B cell (primary cell): ENCODE measurements at regions of chr4 and their contacts with region 1.

Region 1: GRCh38 chr4:101114936-101115372 is 232.4 kb downstream of the PPP3CA start:
- DNase-seq: no peak
- ATAC-seq: no peak
- H3K4me3 ChIP-seq: no peak overlapping the region
- H3K4me3 Mint-ChIP-seq: no peak overlapping the region
- H3K27ac ChIP-seq: no peak overlapping the region
- H3K27ac Mint-ChIP-seq: peak overlapping the region; percentile 48
- H3K4me1 ChIP-seq: no peaks in the 10 kb centered on the region
- H3K4me1 Mint-ChIP-seq: peaks cover 32% of the 10 kb centered on the region
- H3K27me3 ChIP-seq: no peaks in the 10 kb centered on the region
- H3K27me3 Mint-ChIP-seq: no peaks in the 10 kb centered on the region
- CTCF ChIP-seq: no peak

Region 2: GRCh38 chr4:101153653-101154052 is 38.7 kb after region 1 on chr4:
- CTCF ChIA-PET with region 1: no interaction called
- POLR2A ChIA-PET with region 1: no interaction called
- intact Hi-C with region 1: loop called (anchors 5 kb)
- DNase-seq: no peak
- ATAC-seq: peak; percentile 31
- H3K4me3 ChIP-seq: no peak overlapping the region
- H3K4me3 Mint-ChIP-seq: peak overlapping the region; percentile 20
- H3K27ac ChIP-seq: peak overlapping the region in 1 of 2 donors; percentile 59
- H3K27ac Mint-ChIP-seq: peak overlapping the region; percentile 66
- H3K4me1 ChIP-seq: peaks cover 27 to 31% of the 10 kb centered on the region in 2 donors
- H3K4me1 Mint-ChIP-seq: peaks cover 68% of the 10 kb centered on the region
- H3K27me3 ChIP-seq: no peaks in the 10 kb centered on the region
- H3K27me3 Mint-ChIP-seq: no peaks in the 10 kb centered on the region
- CTCF ChIP-seq: no peak